Prostate gland (tissue), 2 donors: ENCODE measurements at regions of chr4 and their contacts with region 1.

Region 1: DNA sequence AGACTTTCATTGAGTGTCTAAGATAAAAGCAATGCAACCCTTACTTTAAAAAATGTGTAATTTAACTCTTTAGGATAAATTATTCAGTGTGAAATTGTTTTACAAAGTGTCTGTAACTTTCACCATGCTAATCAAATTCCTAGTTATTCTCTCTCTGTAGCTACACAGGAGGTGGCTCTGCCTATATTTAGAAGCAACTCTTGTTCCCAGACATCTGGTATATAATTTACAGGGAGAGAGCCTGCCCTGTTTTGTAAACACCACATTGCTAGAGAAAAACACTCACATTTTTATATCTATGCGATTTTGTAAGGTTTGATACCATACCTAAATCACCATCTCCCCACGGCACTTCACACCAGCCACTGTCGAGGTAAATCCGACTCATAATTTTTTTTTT is 35.5 kb upstream of the SPATA4 start:
- DNase-seq: no peak
- H3K4me3 ChIP-seq: no peak overlapping the region
- H3K27ac ChIP-seq: peak overlapping the region in 1 of 2 donors; percentile 6
- H3K4me1 ChIP-seq: no peaks in the 10 kb centered on the region
- H3K27me3 ChIP-seq: no peaks in the 10 kb centered on the region
- CTCF ChIP-seq: no peak
- POLR2A ChIP-seq: no peak

Region 2: DNA sequence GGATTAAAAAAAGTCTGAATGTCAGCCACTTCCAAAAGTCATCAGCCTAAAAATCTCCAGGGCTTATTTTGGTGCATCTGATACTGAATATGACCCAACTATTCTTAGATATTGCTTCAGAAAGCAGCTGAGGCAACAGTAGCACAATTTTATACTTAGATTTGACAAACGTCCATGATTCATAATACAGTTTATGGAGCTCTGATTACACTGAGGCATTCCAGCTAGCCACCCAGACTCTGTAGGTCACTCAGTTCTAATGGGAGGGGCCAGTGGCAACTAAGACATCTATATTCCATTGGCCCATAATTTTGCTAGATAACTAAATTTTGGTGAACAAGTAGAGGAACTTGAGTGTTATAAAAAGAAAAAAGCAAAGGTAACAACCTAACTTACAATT is 45.8 kb before region 1 on chr4:
- intact Hi-C with region 1: loop called (anchors 5 kb)
- DNase-seq: no peak
- H3K4me3 ChIP-seq: no peak overlapping the region
- H3K27ac ChIP-seq: no peak overlapping the region
- H3K4me1 ChIP-seq: no peaks in the 10 kb centered on the region
- H3K27me3 ChIP-seq: no peaks in the 10 kb centered on the region
- CTCF ChIP-seq: no peak
- POLR2A ChIP-seq: no peak

Region 3: GRCh38 chr4:176478076-176478475 is 247.2 kb after region 1 on chr4:
- intact Hi-C with region 1: no loop called
- DNase-seq: no peak
- H3K4me3 ChIP-seq: no peak overlapping the region
- H3K27ac ChIP-seq: no peak overlapping the region
- H3K4me1 ChIP-seq: no peaks in the 10 kb centered on the region
- H3K27me3 ChIP-seq: no peaks in the 10 kb centered on the region
- CTCF ChIP-seq: no peak
- POLR2A ChIP-seq: no peak